Dorsolateral prefrontal cortex (tissue), 120 donors: ENCODE measurements at regions of chr16 and their contacts with region 1.

Region 1: GRCh38 chr16:23729503-23730424 is 16.7 kb upstream of the ERN2 start:
- DNase-seq: no peak
- H3K4me3 ChIP-seq: no peak overlapping the region
- H3K27ac ChIP-seq: no peak overlapping the region
- H3K27me3 ChIP-seq: no peaks in the 10 kb centered on the region
- CTCF ChIP-seq: no peak

Region 2: GRCh38 chr16:23464196-23464595 is 265.6 kb before region 1 on chr16:
- intact Hi-C with region 1: no loop called
- DNase-seq: peak in 6 of 10 donors; percentile 20 to 62 (median 50)
- H3K4me3 ChIP-seq: peak overlapping the region in 1 of 59 donors; percentile 8
- H3K27ac ChIP-seq: peak overlapping the region in 11 of 59 donors; percentile 10 to 62 (median 35)
- H3K27me3 ChIP-seq: peaks cover 0 to 11% (median 0%) of the 10 kb centered on the region in 45 donors
- CTCF ChIP-seq: peak in 3 of 56 donors; percentile 10 to 30 (median 14)

Region 3: GRCh38 chr16:24010440-24011089 is 280.8 kb after region 1 on chr16:
- intact Hi-C with region 1: loop called in 1 of 2 experiments (anchors 5 kb)
- DNase-seq: peak; percentile 75 to 95 (median 82)
- H3K4me3 ChIP-seq: no peak overlapping the region
- H3K27ac ChIP-seq: peak overlapping the region in 9 of 59 donors; percentile 5 to 69 (median 26)
- H3K27me3 ChIP-seq: no peaks in the 10 kb centered on the region
- CTCF ChIP-seq: peak; percentile 62 to 96 (median 89)

Region 4: DNA sequence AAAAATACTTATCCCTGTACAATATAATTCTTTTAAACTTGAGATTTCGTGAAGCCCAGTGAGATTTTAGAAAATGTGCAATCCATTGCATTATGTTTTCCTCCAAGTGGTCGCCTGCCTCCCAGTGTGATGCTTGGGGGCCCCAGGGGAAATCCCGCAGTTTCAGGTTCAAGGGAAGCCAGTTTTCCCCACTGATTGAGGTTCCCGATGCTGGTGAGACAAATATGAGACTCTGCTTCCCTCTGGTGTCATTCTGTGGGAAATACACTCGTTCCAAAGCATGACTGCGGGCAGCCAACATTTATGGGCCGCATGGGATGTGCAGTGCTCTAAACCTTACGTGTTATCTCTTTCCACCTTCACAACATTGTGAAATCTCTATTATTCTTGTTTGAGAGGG is 306.9 kb after region 1 on chr16:
- intact Hi-C with region 1: loop called in 1 of 2 experiments (anchors 2 kb)
- DNase-seq: peak in 5 of 10 donors; percentile 19 to 53 (median 41)
- H3K4me3 ChIP-seq: no peak overlapping the region
- H3K27ac ChIP-seq: peak overlapping the region in 1 of 59 donors; percentile 18
- H3K27me3 ChIP-seq: no peaks in the 10 kb centered on the region
- CTCF ChIP-seq: peak; percentile 43 to 90 (median 80)

Region 5: DNA sequence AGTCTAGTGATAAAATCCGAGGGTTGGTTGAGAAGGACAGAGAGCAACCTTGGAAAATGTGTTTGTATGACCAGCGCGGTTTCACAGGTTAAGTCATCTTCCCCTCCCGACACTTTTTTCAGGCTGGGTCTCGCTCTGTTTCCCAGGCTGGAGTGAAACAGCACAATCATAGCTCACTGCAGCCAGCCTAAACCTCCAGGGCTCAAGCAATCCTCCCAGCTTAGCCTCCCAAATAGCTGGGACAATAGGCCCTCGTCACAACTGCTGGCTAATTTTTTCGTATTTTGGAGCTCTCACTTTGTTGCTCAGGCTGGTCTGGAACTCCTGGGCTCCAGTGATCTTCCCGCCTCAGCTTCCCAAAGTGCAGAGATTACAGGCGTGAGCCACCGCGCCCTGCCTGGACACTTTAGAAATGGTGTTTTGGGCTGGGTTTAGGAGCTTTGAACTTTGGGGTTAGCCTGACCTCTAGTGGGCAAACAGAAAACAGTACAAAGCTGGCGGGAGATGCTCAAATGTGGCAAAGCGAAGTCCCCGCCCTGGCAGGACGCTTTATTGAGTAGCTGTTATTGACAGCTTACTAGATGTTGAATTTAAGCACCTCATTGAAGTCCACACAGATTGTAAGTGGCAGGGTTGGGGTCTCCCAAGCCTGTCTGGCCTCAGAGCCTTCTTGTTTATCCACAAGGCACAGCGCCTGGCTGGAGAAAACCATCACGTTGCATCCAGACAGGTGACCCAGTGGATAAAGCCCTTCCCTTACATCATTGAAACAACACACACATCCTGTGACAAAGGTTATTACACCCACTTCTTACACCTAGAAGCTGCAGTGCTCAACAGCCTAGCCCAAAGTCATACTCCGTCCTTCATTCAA is 774.9 kb after region 1 on chr16:
- intact Hi-C with region 1: loop called (anchors 10 kb)
- DNase-seq: peak; percentile 32 to 65 (median 55)
- H3K4me3 ChIP-seq: no peak overlapping the region
- H3K27ac ChIP-seq: no peak overlapping the region
- H3K27me3 ChIP-seq: peaks cover 0 to 7% (median 0%) of the 10 kb centered on the region in 45 donors
- CTCF ChIP-seq: peak; percentile 63 to 93 (median 85)